ENCODE measurements at regions of chr2 and their contacts with region 1.

Region 1: GRCh38 chr2:54503192-54503591 is 47.1 kb downstream of the SPTBN1 start:
- DNase-seq: peak; percentile 38 to 58 (median 44)
- ATAC-seq: peak; percentile 94
- H3K4me3 ChIP-seq: no peak overlapping the region
- H3K27ac ChIP-seq: no peak overlapping the region
- H3K4me1 ChIP-seq: no peaks in the 10 kb centered on the region
- H3K27me3 ChIP-seq: peaks cover 2 to 10% of the 10 kb centered on the region in 2 experiments; a peak in 2 of 5 replicates
- CTCF ChIP-seq: peak; percentile 69 to 77 (median 70)
- EP300 ChIP-seq: no peak
- POLR2A ChIP-seq: no peak
- RAD21 ChIP-seq: peak; percentile 70 to 91

Region 2: GRCh38 chr2:54106631-54107454 is 396.3 kb before region 1 on chr2:
- CTCF ChIA-PET with region 1: interaction called, 3 read pairs
- POLR2A ChIA-PET with region 1: no interaction called
- in situ Hi-C with region 1: no loop called
- intact Hi-C with region 1: loop called (anchors 2 kb)
- DNase-seq: peak; percentile 17 to 65 (median 35)
- ATAC-seq: peak; percentile 90
- H3K4me3 ChIP-seq: no peak overlapping the region
- H3K27ac ChIP-seq: no peak overlapping the region
- H3K4me1 ChIP-seq: no peaks in the 10 kb centered on the region; a peak in 2 of 5 replicates
- H3K27me3 ChIP-seq: no peaks in the 10 kb centered on the region
- CTCF ChIP-seq: peak; percentile 70 to 79 (median 73)
- EP300 ChIP-seq: no peak
- POLR2A ChIP-seq: no peak
- RAD21 ChIP-seq: peak; percentile 71 to 77

Region 3: GRCh38 chr2:54176577-54176976 is 326.6 kb before region 1 on chr2:
- CTCF ChIA-PET with region 1: no interaction called
- POLR2A ChIA-PET with region 1: no interaction called
- in situ Hi-C with region 1: no loop called
- intact Hi-C with region 1: loop called (anchors 2 kb)
- DNase-seq: peak in 2 of 4 experiments; percentile 14 to 18
- ATAC-seq: peak; percentile 48; the same call in 2 of the 3 replicates
- H3K4me3 ChIP-seq: no peak overlapping the region
- H3K27ac ChIP-seq: no peak overlapping the region
- H3K4me1 ChIP-seq: no peaks in the 10 kb centered on the region
- H3K27me3 ChIP-seq: no peaks in the 10 kb centered on the region
- CTCF ChIP-seq: peak in 2 of 3 experiments; percentile 20 to 21; a peak in 2 of 6 replicates
- EP300 ChIP-seq: no peak
- POLR2A ChIP-seq: no peak
- RAD21 ChIP-seq: peak; percentile 25 to 55; a peak in 3 of 4 replicates

Region 4: DNA sequence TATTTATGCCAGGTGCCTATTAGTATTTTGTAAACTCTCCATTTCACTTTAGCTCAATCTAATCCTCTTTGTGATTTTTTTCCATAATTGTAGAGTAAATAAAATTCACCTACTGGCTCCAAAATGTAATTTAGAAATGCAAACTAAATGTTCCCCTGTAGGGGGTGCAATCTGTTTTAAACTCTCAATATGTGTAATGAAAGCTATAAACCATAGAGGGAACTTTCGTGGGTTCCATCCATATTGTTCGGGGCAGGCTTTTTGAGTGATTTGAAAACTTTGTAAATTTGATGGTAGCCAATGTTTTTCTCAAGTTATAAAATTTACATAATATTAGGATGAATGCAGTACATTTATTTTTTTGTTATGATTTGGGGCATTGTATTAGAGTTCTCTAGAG is 296.6 kb before region 1 on chr2:
- CTCF ChIA-PET with region 1: no interaction called
- POLR2A ChIA-PET with region 1: no interaction called
- in situ Hi-C with region 1: no loop called
- intact Hi-C with region 1: loop called (anchors 5 kb)
- DNase-seq: peak; percentile 22 to 30 (median 24)
- ATAC-seq: peak; percentile 79
- H3K4me3 ChIP-seq: no peak overlapping the region
- H3K27ac ChIP-seq: no peak overlapping the region
- H3K4me1 ChIP-seq: no peaks in the 10 kb centered on the region
- H3K27me3 ChIP-seq: no peaks in the 10 kb centered on the region
- CTCF ChIP-seq: peak; percentile 27 to 68 (median 64); a peak in 4 of 6 replicates
- EP300 ChIP-seq: no peak
- POLR2A ChIP-seq: no peak
- RAD21 ChIP-seq: peak; percentile 49 to 64

Region 5: GRCh38 chr2:54274781-54275242 is 228.4 kb before region 1 on chr2:
- CTCF ChIA-PET with region 1: no interaction called
- POLR2A ChIA-PET with region 1: no interaction called
- in situ Hi-C with region 1: no loop called
- intact Hi-C with region 1: no loop called
- DNase-seq: no peak
- ATAC-seq: peak; percentile 76
- H3K4me3 ChIP-seq: no peak overlapping the region
- H3K27ac ChIP-seq: no peak overlapping the region
- H3K4me1 ChIP-seq: no peaks in the 10 kb centered on the region
- H3K27me3 ChIP-seq: no peaks in the 10 kb centered on the region
- CTCF ChIP-seq: no peak
- EP300 ChIP-seq: peak; percentile 48; the same call in 1 of the 2 replicates
- POLR2A ChIP-seq: no peak
- RAD21 ChIP-seq: no peak

Region 6: DNA sequence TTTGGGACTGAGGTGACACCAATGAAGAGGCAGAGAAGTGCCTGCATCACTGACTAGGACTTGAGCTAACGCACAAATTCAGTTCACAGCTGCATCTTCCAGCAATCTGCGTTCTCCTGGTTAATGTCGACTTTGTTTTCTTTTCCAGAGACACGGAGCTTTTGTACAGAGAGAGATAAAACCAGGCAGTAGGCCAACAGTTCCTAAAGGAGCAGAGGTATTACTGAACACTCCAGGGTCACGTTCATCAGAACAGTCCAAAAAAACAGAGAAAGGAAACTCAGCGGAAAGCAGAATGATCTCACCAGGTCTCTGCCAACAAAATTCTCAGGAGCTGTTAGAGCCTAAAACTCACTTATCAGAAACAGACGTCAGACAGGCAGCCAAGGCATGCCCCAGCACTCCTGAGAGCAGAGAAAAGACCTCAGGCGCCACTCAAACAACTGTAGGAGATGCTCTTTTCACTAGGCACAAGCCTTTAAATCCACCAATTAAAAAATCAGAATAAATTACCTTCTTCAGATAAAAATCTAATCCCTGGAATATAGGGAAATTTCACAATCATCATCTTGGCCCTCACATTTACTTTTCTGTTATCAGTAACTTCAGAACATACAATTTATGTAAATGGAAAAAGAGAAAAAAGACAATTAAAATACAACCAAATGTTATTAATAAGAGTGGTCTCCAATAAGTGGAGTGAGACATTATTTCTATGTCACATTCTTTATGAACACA is 143.0 kb before region 1 on chr2:
- CTCF ChIA-PET with region 1: no interaction called
- POLR2A ChIA-PET with region 1: no interaction called
- in situ Hi-C with region 1: no loop called
- intact Hi-C with region 1: loop called (anchors 10 kb)
- DNase-seq: no peak
- ATAC-seq: no peak
- H3K4me3 ChIP-seq: no peak overlapping the region
- H3K27ac ChIP-seq: no peak overlapping the region
- H3K4me1 ChIP-seq: no peaks in the 10 kb centered on the region
- H3K27me3 ChIP-seq: peaks cover 0 to 3% of the 10 kb centered on the region in 2 experiments; a peak in 2 of 5 replicates
- CTCF ChIP-seq: no peak
- EP300 ChIP-seq: no peak
- POLR2A ChIP-seq: no peak
- RAD21 ChIP-seq: no peak

Region 7: DNA sequence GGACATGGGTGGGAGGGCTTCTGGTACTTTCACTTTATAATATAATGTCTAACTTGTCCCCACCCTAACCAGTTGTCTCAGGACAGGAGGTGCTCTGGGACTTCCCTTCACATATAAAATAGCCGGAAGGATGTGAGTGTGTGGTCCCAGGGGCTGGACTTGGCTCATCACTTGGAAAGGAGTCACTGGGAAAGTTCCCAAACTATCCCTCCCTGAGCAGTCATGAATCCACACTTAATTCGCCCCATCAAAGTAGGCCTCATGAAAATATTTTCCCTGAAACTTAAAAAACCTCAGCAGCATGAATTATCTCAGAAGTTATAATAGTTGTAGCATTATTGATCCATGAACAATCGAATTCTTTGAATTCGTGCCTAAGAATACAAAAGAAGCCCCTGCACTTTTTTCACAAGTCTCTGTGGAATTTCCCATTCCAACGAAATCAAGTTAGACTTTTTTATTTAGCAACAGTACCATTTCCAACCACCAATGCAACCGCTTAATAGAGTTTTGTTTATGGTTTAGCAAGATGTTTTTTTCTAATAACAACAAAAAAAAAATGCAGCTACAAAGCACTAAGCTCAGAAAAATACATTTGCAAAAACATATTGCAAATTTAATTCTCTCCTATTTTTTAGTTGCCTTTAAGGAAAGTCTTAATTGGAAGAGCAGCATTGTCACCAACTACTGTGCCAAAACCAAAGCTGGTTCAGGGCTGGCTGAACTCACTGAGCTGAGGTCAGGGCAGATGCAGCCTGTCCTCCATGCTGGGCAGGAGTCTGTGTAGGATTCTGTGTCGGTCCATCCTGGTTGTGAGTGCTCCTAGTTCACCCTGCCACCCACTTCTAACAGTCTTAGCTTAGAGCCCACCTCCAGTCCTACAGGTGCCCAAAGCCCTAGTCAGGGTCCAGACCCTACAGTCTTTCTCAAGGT is 115.9 kb before region 1 on chr2:
- CTCF ChIA-PET with region 1: no interaction called
- POLR2A ChIA-PET with region 1: no interaction called
- in situ Hi-C with region 1: no loop called
- intact Hi-C with region 1: no loop called
- DNase-seq: no peak
- ATAC-seq: no peak
- H3K4me3 ChIP-seq: no peak overlapping the region
- H3K27ac ChIP-seq: no peak overlapping the region
- H3K4me1 ChIP-seq: no peaks in the 10 kb centered on the region
- H3K27me3 ChIP-seq: peaks cover 0 to 15% of the 10 kb centered on the region in 2 experiments; a peak in 4 of 5 replicates
- CTCF ChIP-seq: no peak
- EP300 ChIP-seq: no peak
- POLR2A ChIP-seq: no peak
- RAD21 ChIP-seq: no peak

Measured in K562 (cell line).